ENCODE measurements at regions of chr11 and their contacts with region 1.

Region 1: DNA sequence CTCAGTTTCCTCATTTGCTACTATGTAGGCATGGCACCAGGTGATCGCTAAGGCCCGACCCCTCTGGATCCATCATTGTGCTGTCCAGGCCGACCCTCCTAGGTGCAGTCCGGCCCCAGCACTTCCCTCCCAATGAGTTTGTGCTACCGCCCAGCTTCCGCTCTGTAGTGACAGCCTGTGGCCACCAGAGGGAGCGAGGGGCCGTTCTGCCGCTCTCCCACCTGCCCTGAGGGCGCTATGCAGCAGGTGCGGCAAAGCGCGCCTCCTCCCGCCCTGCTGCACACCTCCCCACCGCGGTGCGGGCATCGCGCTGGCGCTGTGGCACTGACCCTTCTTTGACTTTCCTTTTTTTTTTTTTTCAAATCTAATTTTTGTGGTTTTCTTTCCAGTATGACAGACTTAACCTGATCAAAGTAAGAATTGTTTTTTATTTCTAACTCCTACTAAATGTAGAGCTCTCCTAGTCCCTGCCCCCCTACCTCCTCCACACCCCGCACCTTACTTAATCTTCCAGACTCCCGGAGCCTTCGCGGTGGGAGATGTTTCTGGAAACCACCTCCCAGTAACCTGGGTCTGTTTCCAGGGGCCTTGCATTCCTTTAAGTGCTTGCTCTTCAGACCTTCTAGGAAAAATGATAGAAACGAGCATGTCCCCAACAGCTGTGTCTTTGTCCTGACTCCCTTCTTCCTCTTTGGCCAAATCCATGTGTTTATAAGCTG is 73.7 kb downstream of the SCN3B start:
- DNase-seq: peak; percentile 51 to 59 (median 57)
- H3K4me3 ChIP-seq: no peak overlapping the region
- H3K4me3 Mint-ChIP-seq: peak overlapping the region in 4 of 8 donors; percentile 26 to 46 (median 36)
- H3K27ac ChIP-seq: no peak overlapping the region
- H3K27ac Mint-ChIP-seq: peak overlapping the region in 1 of 7 donors; percentile 7
- H3K4me1 ChIP-seq: peaks cover 18% of the 10 kb centered on the region
- H3K4me1 Mint-ChIP-seq: peaks cover 13 to 29% (median 23%) of the 10 kb centered on the region in 4 donors
- H3K27me3 ChIP-seq: no peaks in the 10 kb centered on the region
- H3K27me3 Mint-ChIP-seq: no peaks in the 10 kb centered on the region

Region 2: GRCh38 chr11:123511037-123511870 is 69.5 kb before region 1 on chr11:
- CTCF ChIA-PET with region 1: interaction called, 11 read pairs
- POLR2A ChIA-PET with region 1: no interaction called
- intact Hi-C with region 1: loop called (anchors 1 kb)
- DNase-seq: peak; percentile 52 to 59 (median 54)
- H3K4me3 ChIP-seq: no peak overlapping the region
- H3K4me3 Mint-ChIP-seq: no peak overlapping the region
- H3K27ac ChIP-seq: no peak overlapping the region
- H3K27ac Mint-ChIP-seq: peak overlapping the region in 2 of 7 donors; percentile 45 to 54
- H3K4me1 ChIP-seq: no peaks in the 10 kb centered on the region
- H3K4me1 Mint-ChIP-seq: peaks cover 9 to 29% (median 14%) of the 10 kb centered on the region in 4 donors
- H3K27me3 ChIP-seq: no peaks in the 10 kb centered on the region
- H3K27me3 Mint-ChIP-seq: no peaks in the 10 kb centered on the region

Region 3: GRCh38 chr11:123560006-123560405 is 20.7 kb before region 1 on chr11:
- CTCF ChIA-PET with region 1: interaction called, 11 read pairs
- POLR2A ChIA-PET with region 1: no interaction called
- intact Hi-C with region 1: no loop called
- DNase-seq: no peak
- H3K4me3 ChIP-seq: no peak overlapping the region
- H3K4me3 Mint-ChIP-seq: peak overlapping the region in 6 of 8 donors; percentile 25 to 72 (median 56)
- H3K27ac ChIP-seq: no peak overlapping the region
- H3K27ac Mint-ChIP-seq: peak overlapping the region in 1 of 7 donors; percentile 74
- H3K4me1 ChIP-seq: no peaks in the 10 kb centered on the region
- H3K4me1 Mint-ChIP-seq: peaks cover 0 to 7% (median 4%) of the 10 kb centered on the region in 4 donors
- H3K27me3 ChIP-seq: no peaks in the 10 kb centered on the region
- H3K27me3 Mint-ChIP-seq: no peaks in the 10 kb centered on the region

Region 4: DNA sequence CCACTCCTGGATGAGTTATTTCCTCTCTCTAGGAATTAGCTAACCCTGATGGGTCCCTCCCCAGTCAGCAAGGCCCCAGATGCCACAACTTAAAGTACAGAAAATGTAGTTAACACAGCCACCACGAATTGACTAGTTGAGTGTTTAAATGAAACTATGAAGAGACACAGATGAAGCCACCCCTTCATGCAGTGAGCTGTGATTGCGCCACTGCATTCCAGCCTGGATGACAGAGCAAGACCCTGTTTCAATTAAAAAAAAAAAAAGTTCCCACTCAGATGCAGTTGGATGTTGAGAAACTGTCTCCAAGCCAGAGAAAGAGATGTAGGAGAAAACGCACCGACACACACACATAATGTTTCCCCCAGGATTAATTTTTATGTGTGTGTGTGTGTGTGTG is 20.4 kb after region 1 on chr11:
- CTCF ChIA-PET with region 1: interaction called, 15 read pairs
- POLR2A ChIA-PET with region 1: no interaction called
- intact Hi-C with region 1: no loop called
- DNase-seq: no peak
- H3K4me3 ChIP-seq: no peak overlapping the region
- H3K4me3 Mint-ChIP-seq: no peak overlapping the region
- H3K27ac ChIP-seq: no peak overlapping the region
- H3K27ac Mint-ChIP-seq: peak overlapping the region in 1 of 7 donors; percentile 60
- H3K4me1 ChIP-seq: no peaks in the 10 kb centered on the region
- H3K4me1 Mint-ChIP-seq: no peaks in the 10 kb centered on the region
- H3K27me3 ChIP-seq: no peaks in the 10 kb centered on the region
- H3K27me3 Mint-ChIP-seq: no peaks in the 10 kb centered on the region

Region 5: GRCh38 chr11:123707606-123708205 is 127.0 kb after region 1 on chr11:
- CTCF ChIA-PET with region 1: interaction called, 30 read pairs
- POLR2A ChIA-PET with region 1: no interaction called
- intact Hi-C with region 1: loop called (anchors 1 kb)
- DNase-seq: peak in 4 of 5 donors; percentile 33 to 45 (median 40)
- H3K4me3 ChIP-seq: no peak overlapping the region
- H3K4me3 Mint-ChIP-seq: no peak overlapping the region
- H3K27ac ChIP-seq: no peak overlapping the region
- H3K27ac Mint-ChIP-seq: no peak overlapping the region
- H3K4me1 ChIP-seq: no peaks in the 10 kb centered on the region
- H3K4me1 Mint-ChIP-seq: no peaks in the 10 kb centered on the region
- H3K27me3 ChIP-seq: no peaks in the 10 kb centered on the region
- H3K27me3 Mint-ChIP-seq: peaks cover under 1 to 7% of the 10 kb centered on the region in 2 donors